HEK293T (cell line): ENCODE measurements at regions of chr9 and their contacts with region 1.

Region 1: GRCh38 chr9:112074250-112075008 is 100.7 kb downstream of the SUSD1 start:
- DNase-seq: peak; percentile 59

Region 2: DNA sequence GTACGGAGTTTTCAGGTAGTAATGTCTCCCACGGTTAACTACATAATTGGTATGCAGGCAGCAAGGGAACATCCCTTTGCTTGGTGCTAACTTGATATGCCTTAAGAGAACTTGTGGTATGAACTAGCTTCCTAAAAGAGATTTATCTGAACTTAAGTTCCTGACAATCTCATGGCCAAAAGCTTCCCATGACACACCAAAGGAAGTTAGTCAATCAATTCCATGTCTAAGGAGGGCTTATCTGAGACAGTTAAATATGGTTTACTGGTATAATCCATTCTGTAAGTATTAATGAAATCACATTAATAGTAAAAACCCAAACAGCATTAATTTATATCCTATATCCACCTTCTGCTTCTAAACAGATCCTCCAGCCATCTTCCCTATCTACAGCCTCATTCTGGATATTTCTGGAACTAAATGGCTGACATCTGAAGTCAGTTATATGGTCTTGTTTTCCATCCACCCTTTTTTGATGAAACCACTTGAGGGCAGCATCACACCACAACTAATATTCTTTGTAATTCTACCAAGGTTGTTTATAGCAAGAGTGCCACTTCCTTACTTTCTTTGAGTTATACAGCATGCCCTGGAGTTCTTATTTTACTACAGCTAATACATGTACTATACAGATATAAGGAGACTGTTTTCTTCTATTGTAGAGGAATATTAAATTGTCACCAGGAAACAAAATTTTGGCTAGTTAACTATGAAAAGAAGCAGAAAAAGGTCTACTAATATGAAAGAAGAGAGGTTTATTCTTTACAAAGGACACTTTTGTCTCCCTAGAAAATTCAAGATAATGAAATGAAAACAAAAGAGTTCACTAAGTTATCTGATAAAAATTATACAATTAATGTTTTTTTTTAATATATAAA is 314.4 kb before region 1 on chr9:
- CTCF ChIA-PET with region 1: interaction called, 16 read pairs
- POLR2A ChIA-PET with region 1: no interaction called
- DNase-seq: peak; percentile 47

Region 3: DNA sequence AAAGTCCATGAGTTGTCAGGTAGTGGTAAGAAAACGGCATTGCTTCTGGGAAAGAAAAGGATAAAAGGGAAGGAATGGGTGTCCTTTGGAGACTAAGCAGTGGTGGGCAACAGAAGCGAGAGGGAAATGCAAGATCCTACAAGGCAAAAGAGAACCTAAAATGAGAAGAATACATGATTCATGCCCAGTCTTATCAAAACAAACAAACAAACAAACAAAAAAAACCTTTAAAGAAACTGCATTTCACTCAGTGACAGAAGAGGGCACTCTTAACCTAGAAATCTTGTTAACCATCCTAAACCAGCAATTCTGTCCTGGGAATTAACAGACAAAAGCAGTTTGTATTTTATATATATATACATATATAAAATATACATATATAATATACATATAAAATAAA is 12.2 kb after region 1 on chr9:
- CTCF ChIA-PET with region 1: no interaction called
- POLR2A ChIA-PET with region 1: no interaction called
- DNase-seq: peak; percentile 20